ENCODE measurements at regions of chr6 and their contacts with region 1.

Region 1: DNA sequence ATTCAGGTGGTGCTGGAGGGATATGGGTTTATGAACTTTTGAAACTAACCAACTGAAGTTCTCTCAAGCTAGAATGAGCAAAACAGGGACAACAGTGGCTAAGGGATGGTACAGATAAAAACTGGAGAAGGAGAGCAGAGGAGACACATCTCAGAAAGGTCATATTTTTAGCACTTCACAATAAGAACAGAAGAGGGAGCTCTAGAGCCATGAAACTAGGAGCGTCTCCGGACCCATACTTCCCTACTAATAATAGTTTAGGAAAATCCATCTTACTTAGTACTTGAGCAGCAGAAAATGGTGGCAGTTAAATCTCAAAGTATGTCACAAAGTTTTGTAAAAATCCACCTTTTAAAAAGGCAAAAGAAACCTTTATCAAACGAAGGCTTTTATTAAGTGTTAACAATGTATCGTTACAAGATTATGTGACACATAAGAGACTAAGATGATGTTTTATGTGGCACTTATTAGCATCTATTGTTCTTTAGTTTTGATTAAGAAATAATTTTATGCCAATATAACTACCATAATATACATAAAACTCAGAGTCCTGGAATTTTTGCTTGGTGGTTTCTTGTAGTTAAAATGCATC is 278.6 kb downstream of the TBC1D32 start:
- DNase-seq: peak; percentile 33
- H3K4me3 Mint-ChIP-seq: no peak overlapping the region
- H3K27ac Mint-ChIP-seq: no peak overlapping the region
- H3K4me1 Mint-ChIP-seq: peaks cover 9% of the 10 kb centered on the region
- H3K27me3 Mint-ChIP-seq: no peaks in the 10 kb centered on the region
- CTCF ChIP-seq: peak; percentile 42

Region 2: GRCh38 chr6:121222656-121223055 is 167.0 kb after region 1 on chr6:
- CTCF ChIA-PET with region 1: no interaction called
- intact Hi-C with region 1: loop called (anchors 1 kb)
- DNase-seq: no peak
- H3K4me3 Mint-ChIP-seq: no peak overlapping the region
- H3K27ac Mint-ChIP-seq: no peak overlapping the region
- H3K4me1 Mint-ChIP-seq: no peaks in the 10 kb centered on the region
- H3K27me3 Mint-ChIP-seq: no peaks in the 10 kb centered on the region
- CTCF ChIP-seq: no peak

Region 3: GRCh38 chr6:121305957-121306607 is 250.4 kb after region 1 on chr6:
- CTCF ChIA-PET with region 1: interaction called, 5 read pairs
- intact Hi-C with region 1: loop called (anchors 1 kb)
- DNase-seq: peak; percentile 2
- H3K4me3 Mint-ChIP-seq: no peak overlapping the region
- H3K27ac Mint-ChIP-seq: no peak overlapping the region
- H3K4me1 Mint-ChIP-seq: no peaks in the 10 kb centered on the region
- H3K27me3 Mint-ChIP-seq: no peaks in the 10 kb centered on the region
- CTCF ChIP-seq: peak; percentile 35

Region 4: GRCh38 chr6:121399966-121400365 is 344.3 kb after region 1 on chr6:
- CTCF ChIA-PET with region 1: interaction called, 3 read pairs
- intact Hi-C with region 1: loop called (anchors 2 kb)
- DNase-seq: no peak
- H3K4me3 Mint-ChIP-seq: no peak overlapping the region
- H3K27ac Mint-ChIP-seq: no peak overlapping the region
- H3K4me1 Mint-ChIP-seq: no peaks in the 10 kb centered on the region
- H3K27me3 Mint-ChIP-seq: no peaks in the 10 kb centered on the region
- CTCF ChIP-seq: no peak

Region 5: GRCh38 chr6:122033539-122034181 is 978.0 kb after region 1 on chr6:
- CTCF ChIA-PET with region 1: no interaction called
- intact Hi-C with region 1: loop called (anchors 5 kb)
- DNase-seq: peak; percentile 9
- H3K4me3 Mint-ChIP-seq: no peak overlapping the region
- H3K27ac Mint-ChIP-seq: no peak overlapping the region
- H3K4me1 Mint-ChIP-seq: peaks cover 12% of the 10 kb centered on the region
- H3K27me3 Mint-ChIP-seq: no peaks in the 10 kb centered on the region
- CTCF ChIP-seq: no peak

Region 6: GRCh38 chr6:122184401-122184827 is 1128.7 kb after region 1 on chr6:
- CTCF ChIA-PET with region 1: no interaction called
- intact Hi-C with region 1: loop called (anchors 10 kb)
- DNase-seq: no peak
- H3K4me3 Mint-ChIP-seq: no peak overlapping the region
- H3K27ac Mint-ChIP-seq: no peak overlapping the region
- H3K4me1 Mint-ChIP-seq: no peaks in the 10 kb centered on the region
- H3K27me3 Mint-ChIP-seq: no peaks in the 10 kb centered on the region
- CTCF ChIP-seq: no peak

Measured in Calu3 (cell line).